WTC11 (cell line): ENCODE measurements at regions of chr1 and their contacts with region 1.

Region 1: GRCh38 chr1:229258031-229258756 is 12.7 kb upstream of the RAB4A start:
- DNase-seq: peak; percentile 62
- ATAC-seq: peak; percentile 76
- H3K4me3 Mint-ChIP-seq: no peak overlapping the region
- H3K27ac Mint-ChIP-seq: peak overlapping the region; percentile 55
- H3K4me1 Mint-ChIP-seq: peaks cover 30% of the 10 kb centered on the region
- H3K27me3 Mint-ChIP-seq: no peaks in the 10 kb centered on the region
- CTCF ChIP-seq: peak; percentile 80

Region 2: DNA sequence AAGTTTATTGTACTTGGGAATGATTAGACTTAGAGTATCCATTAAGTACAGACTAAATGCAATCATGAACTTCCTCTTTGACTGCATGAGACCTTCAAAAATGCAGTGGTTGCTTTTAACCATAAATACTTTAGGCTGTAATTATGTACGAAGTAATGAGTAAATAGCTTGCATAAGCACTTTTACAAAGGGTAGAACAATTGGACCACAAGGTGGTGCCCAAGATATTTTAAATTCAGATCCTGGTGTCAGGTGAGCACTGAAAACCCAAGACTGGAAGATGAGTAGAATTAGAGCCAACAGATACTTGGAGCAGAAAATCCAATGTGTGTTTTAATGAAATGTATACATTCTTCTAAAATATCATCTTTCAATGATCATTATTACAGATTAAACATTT is 566.3 kb before region 1 on chr1:
- CTCF ChIA-PET with region 1: interaction called, 14 read pairs
- POLR2A ChIA-PET with region 1: no interaction called
- DNase-seq: no peak
- ATAC-seq: peak; percentile 53; the same call in 1 of the 2 replicates
- H3K4me3 Mint-ChIP-seq: no peak overlapping the region
- H3K27ac Mint-ChIP-seq: no peak overlapping the region; the same call in 1 of the 2 replicates
- H3K4me1 Mint-ChIP-seq: peaks cover 6% of the 10 kb centered on the region
- H3K27me3 Mint-ChIP-seq: no peaks in the 10 kb centered on the region
- CTCF ChIP-seq: 0 out of 2 replicates have a peak, but pooled peaks have one; percentile 27

Region 3: GRCh38 chr1:229092377-229093237 is 165.6 kb before region 1 on chr1:
- CTCF ChIA-PET with region 1: interaction called, 11 read pairs
- POLR2A ChIA-PET with region 1: no interaction called
- DNase-seq: no peak
- ATAC-seq: peak; percentile 36
- H3K4me3 Mint-ChIP-seq: peak overlapping the region; percentile 55
- H3K27ac Mint-ChIP-seq: peak overlapping the region; percentile 97
- H3K4me1 Mint-ChIP-seq: peaks cover 82% of the 10 kb centered on the region
- H3K27me3 Mint-ChIP-seq: peaks cover 1% of the 10 kb centered on the region; the same call in 1 of the 2 replicates
- CTCF ChIP-seq: no peak

Region 4: GRCh38 chr1:229217734-229218133 is 40.5 kb before region 1 on chr1:
- CTCF ChIA-PET with region 1: no interaction called
- POLR2A ChIA-PET with region 1: no interaction called
- DNase-seq: no peak
- ATAC-seq: peak; percentile 66
- H3K4me3 Mint-ChIP-seq: no peak overlapping the region
- H3K27ac Mint-ChIP-seq: no peak overlapping the region
- H3K4me1 Mint-ChIP-seq: no peaks in the 10 kb centered on the region
- H3K27me3 Mint-ChIP-seq: no peaks in the 10 kb centered on the region; the same call in 1 of the 2 replicates
- CTCF ChIP-seq: no peak

Region 5: DNA sequence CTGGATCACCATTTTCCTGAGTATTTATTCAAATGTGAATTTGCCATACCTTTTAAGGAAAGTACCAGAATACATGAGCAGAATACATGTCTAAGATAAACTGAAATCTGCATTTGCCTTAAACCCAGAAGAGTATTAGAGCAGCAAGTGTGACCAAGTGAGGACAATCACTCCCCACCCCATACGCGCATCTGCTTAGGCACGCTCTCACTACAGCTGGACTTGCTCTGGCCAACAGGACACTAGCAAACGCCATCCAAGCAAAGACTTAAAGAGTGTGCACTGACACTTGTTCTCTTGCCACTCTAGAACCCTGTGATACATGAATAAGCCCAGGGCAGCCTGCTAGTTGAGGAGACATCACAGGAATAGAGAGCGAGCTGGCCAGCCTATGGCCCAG is 224.3 kb after region 1 on chr1:
- CTCF ChIA-PET with region 1: interaction called, 34 read pairs
- POLR2A ChIA-PET with region 1: no interaction called
- DNase-seq: no peak
- ATAC-seq: no peak
- H3K4me3 Mint-ChIP-seq: no peak overlapping the region
- H3K27ac Mint-ChIP-seq: peak overlapping the region; percentile 80
- H3K4me1 Mint-ChIP-seq: no peaks in the 10 kb centered on the region
- H3K27me3 Mint-ChIP-seq: no peaks in the 10 kb centered on the region
- CTCF ChIP-seq: no peak